BJ (cell line): ENCODE measurements at regions of chr2 and their contacts with region 1.

Region 1: DNA sequence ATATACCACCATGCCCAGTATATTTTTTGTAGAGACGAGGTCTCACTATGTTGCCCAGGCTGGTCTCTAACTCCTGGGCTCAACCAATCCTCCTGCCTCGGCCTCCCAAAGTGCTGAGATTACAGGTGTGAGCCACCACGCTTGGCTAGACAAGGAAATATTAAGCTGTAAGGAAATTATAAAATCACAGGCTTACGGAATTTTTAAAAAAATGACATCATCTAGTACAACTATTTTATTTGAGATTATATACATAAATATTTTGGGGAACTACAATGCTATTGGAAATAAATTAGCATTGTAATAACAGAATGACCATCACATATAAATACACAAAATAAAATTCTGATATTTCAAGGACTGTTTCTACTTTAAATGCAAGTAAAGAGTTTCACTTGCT is 41.8 kb downstream of the PPP4R3B start:
- DNase-seq: no peak
- H3K4me3 ChIP-seq: no peak overlapping the region
- H3K27me3 ChIP-seq: no peaks in the 10 kb centered on the region
- CTCF ChIP-seq: no peak

Region 2: GRCh38 chr2:55355451-55355850 is 220.1 kb before region 1 on chr2:
- CTCF ChIA-PET with region 1: no interaction called
- POLR2A ChIA-PET with region 1: no interaction called
- DNase-seq: no peak
- H3K4me3 ChIP-seq: no peak overlapping the region
- H3K27me3 ChIP-seq: no peaks in the 10 kb centered on the region
- CTCF ChIP-seq: no peak

Region 3: GRCh38 chr2:55441280-55441892 is 134.2 kb before region 1 on chr2:
- CTCF ChIA-PET with region 1: no interaction called
- POLR2A ChIA-PET with region 1: no interaction called
- DNase-seq: no peak
- H3K4me3 ChIP-seq: no peak overlapping the region
- H3K27me3 ChIP-seq: no peaks in the 10 kb centered on the region; the same call in 1 of the 2 replicates
- CTCF ChIP-seq: no peak

Region 4: GRCh38 chr2:55649211-55649610 is 73.6 kb after region 1 on chr2:
- CTCF ChIA-PET with region 1: no interaction called
- POLR2A ChIA-PET with region 1: no interaction called
- DNase-seq: no peak
- H3K4me3 ChIP-seq: no peak overlapping the region
- H3K27me3 ChIP-seq: no peaks in the 10 kb centered on the region
- CTCF ChIP-seq: no peak

Region 5: GRCh38 chr2:56089931-56090330 is 514.3 kb after region 1 on chr2:
- CTCF ChIA-PET with region 1: no interaction called
- POLR2A ChIA-PET with region 1: interaction called, 12 read pairs
- DNase-seq: no peak
- H3K4me3 ChIP-seq: no peak overlapping the region
- H3K27me3 ChIP-seq: no peaks in the 10 kb centered on the region
- CTCF ChIP-seq: no peak